Activated CD8-positive, alpha-beta memory T cell treated with anti-CD3 and anti-CD28 coated beads, Interleukin-2, amount 10 ng/mL, durations not matched to agents 7 days and 5 days (primary cell): ENCODE measurements at regions of chr22 and their contacts with region 1.

Region 1: DNA sequence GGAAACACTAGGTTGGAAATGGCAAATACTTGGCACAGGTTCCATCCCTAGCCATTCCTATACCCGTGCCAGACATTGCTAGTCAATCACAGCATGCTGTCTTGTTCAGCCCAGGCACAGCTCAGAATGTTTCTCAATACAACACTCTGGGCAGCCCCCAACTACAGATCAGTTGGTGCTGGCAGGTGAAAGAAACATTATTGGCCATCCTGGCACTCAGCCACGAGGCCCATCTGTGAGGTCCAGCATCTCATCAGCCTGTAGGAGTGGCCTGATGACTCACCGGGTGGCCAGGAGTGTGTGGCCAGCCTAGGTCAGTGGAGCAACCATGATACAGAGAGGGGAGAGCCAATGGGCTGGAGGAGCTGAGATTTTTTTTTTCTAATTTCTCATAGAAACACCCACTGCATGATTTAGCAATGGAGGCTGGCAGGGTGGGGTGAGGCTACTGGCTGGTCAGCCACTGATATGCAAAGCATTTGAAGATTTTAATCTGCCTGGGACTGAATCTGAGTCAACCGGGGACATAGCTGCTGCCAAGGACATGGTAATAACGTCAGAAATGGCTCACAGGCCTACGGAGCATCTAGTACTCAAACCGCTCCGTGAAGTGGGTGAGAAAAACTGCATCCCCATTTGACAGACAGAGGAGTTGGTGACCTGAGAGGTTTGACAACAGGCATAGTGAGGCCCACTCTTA is 5.4 kb downstream of the MYO18B start:
- DNase-seq: no peak
- ATAC-seq: no peak
- H3K4me3 Mint-ChIP-seq: no peak overlapping the region
- H3K27ac Mint-ChIP-seq: peak overlapping the region; percentile 99
- H3K4me1 Mint-ChIP-seq: peaks cover 77% of the 10 kb centered on the region
- H3K27me3 Mint-ChIP-seq: no peaks in the 10 kb centered on the region

Region 2: DNA sequence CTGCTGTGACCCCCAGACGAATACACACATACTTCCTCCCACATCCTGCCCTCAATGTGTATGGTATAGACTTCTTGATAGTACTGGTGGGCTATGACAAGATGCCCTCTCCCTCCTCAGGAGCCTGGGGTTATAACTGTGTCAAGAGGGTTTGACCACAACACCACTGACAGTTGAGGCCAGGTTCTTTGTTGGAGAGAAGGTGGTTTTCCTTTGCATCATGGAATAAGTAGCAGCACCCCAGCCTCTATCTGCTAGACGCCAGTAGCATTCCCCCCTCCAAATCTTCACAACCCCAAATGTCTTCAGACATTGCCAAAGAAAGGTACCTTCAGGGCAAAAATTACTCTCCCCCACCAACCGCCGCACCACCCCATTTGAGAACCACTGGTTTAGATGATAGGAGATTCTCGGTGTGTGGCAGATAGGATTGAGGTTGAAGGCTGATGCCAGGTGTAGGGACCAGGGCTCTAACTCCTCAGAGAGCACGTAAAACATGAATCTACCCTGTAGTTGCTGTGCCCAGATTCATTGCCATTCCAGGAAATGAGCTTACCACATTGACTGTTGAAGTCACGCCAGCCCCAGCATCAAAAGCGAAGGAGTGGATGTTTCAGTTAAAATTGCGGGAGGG is 10.9 kb before region 1 on chr22:
- CTCF ChIA-PET with region 1: interaction called, 39 read pairs
- DNase-seq: peak; percentile 92
- ATAC-seq: peak; percentile 88
- H3K4me3 Mint-ChIP-seq: peak overlapping the region; percentile 57
- H3K27ac Mint-ChIP-seq: peak overlapping the region; percentile 98
- H3K4me1 Mint-ChIP-seq: peaks cover 62% of the 10 kb centered on the region
- H3K27me3 Mint-ChIP-seq: no peaks in the 10 kb centered on the region

Region 3: DNA sequence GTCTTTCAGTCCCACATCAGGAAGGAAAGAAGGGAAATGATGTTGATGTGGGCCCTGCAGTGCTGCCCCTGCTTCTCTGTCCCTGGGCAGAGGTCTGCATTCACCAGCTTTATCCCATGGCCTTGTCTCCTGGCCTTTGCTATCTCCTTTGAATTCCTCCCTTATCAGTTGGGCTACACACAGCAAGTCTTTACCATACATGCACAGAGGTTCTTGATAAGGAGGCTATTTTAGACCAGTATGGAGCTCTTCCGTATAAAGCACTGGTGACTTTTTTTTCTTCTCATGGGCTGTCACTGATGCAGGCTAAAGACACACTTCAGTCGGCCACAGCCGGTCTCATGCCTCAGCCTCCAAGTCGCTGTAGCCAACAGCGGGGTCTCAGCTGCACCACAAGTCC is 14.8 kb after region 1 on chr22:
- CTCF ChIA-PET with region 1: interaction called, 16 read pairs
- DNase-seq: no peak
- ATAC-seq: no peak
- H3K4me3 Mint-ChIP-seq: no peak overlapping the region
- H3K27ac Mint-ChIP-seq: no peak overlapping the region
- H3K4me1 Mint-ChIP-seq: peaks cover 31% of the 10 kb centered on the region
- H3K27me3 Mint-ChIP-seq: no peaks in the 10 kb centered on the region